ENCODE measurements at regions of chr14 and their contacts with region 1.

Region 1: DNA sequence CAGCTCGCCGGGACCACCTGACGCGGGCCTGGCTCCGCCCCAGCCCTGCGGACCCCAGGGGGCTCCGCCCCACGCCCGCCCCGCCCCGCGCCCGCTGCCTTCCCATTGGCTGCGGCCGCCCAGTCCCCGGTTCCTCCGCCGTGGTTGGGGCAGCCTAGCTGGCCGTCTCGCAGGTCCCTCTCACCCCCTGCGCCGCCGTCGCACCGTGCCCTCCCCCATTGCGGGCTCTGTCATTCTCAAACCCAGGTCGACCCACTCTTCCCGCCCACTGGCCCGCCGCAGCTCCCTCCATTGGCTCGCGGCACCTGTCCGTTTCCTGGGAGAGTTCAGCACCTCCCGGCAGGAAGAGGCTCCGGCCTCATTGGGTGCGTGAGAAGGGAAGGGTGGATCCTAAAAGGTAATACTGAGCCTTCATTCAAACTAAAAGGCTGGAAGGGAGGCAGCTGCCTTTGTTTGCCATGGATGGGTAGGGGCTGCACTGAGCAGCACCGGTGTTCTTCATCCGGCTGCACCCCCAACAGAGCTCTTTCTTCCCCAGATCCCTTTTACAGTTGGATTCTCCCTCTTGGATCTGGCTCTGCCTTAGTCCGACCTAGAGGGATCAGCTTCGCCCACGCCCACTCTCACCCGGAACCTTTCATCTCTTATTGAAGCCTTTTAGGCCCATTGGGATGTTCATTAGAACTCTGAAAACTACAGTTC is 381 bp upstream of the MAP3K9 start:
- DNase-seq: peak; percentile 99
- H3K4me3 Mint-ChIP-seq: no peak overlapping the region
- H3K27ac Mint-ChIP-seq: no peak overlapping the region
- H3K4me1 Mint-ChIP-seq: peaks cover 14% of the 10 kb centered on the region
- H3K27me3 Mint-ChIP-seq: no peaks in the 10 kb centered on the region
- CTCF ChIP-seq: no peak

Region 2: DNA sequence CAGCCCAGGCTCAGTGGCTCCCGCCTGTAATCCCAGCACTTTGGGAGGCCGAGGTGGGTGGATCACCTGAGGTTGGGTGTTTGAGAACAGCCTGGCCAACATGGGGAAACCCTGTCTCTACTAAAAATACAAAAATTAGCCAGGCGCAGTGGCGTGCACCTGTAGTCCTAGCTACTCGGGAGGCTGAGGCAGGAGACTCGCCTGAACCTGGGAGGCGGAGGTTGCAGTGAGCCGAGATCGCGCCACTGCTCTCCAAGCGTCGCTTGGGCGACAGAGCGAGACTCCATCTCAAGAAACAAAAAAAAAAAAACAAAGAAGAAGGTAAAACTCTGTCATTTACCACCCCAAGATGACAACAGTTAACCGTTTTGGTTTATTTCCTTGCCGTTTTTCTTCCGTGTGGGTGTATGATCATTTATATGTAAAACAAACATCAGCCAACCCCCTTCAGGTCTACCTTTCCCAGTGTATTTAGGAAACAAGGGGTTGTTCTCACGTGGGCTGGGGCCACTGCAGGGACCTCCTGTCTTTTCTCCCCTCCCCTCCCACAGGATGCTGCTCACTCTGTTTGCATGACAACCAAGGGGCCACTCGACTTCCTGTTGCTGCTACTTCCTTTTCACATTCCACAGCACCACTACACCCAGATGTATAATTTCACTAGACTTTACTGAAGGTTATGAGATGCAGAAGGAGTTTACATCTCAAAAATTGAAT is 154.4 kb before region 1 on chr14:
- CTCF ChIA-PET with region 1: no interaction called
- intact Hi-C with region 1: no loop called
- DNase-seq: peak; percentile 31
- H3K4me3 Mint-ChIP-seq: no peak overlapping the region
- H3K27ac Mint-ChIP-seq: no peak overlapping the region
- H3K4me1 Mint-ChIP-seq: peaks cover 14% of the 10 kb centered on the region
- H3K27me3 Mint-ChIP-seq: no peaks in the 10 kb centered on the region
- CTCF ChIP-seq: no peak

Region 3: GRCh38 chr14:70744641-70745040 is 65.1 kb before region 1 on chr14:
- CTCF ChIA-PET with region 1: no interaction called
- intact Hi-C with region 1: no loop called
- DNase-seq: no peak
- H3K4me3 Mint-ChIP-seq: no peak overlapping the region
- H3K27ac Mint-ChIP-seq: no peak overlapping the region
- H3K4me1 Mint-ChIP-seq: no peaks in the 10 kb centered on the region
- H3K27me3 Mint-ChIP-seq: no peaks in the 10 kb centered on the region
- CTCF ChIP-seq: no peak

Region 4: GRCh38 chr14:70754989-70755388 is 54.7 kb before region 1 on chr14:
- CTCF ChIA-PET with region 1: interaction called, 15 read pairs
- intact Hi-C with region 1: loop called (anchors 1 kb)
- DNase-seq: peak; percentile 91
- H3K4me3 Mint-ChIP-seq: peak overlapping the region; percentile 27
- H3K27ac Mint-ChIP-seq: peak overlapping the region; percentile 24
- H3K4me1 Mint-ChIP-seq: peaks cover 42% of the 10 kb centered on the region
- H3K27me3 Mint-ChIP-seq: no peaks in the 10 kb centered on the region
- CTCF ChIP-seq: no peak